Transverse colon (tissue), 4 donors: ENCODE measurements at regions of chr17 and their contacts with region 1.

Region 1: GRCh38 chr17:71548540-71549190 is 572.2 kb upstream of the SOX9 start:
- DNase-seq: no peak
- H3K4me3 ChIP-seq: no peak overlapping the region
- H3K27ac ChIP-seq: no peak overlapping the region
- H3K4me1 ChIP-seq: peaks cover 0 to under 1% (median 0%) of the 10 kb centered on the region in 4 donors
- H3K27me3 ChIP-seq: no peaks in the 10 kb centered on the region
- CTCF ChIP-seq: no peak
- EP300 ChIP-seq: no peak
- POLR2A ChIP-seq: no peak

Region 2: GRCh38 chr17:71127416-71127815 is 421.2 kb before region 1 on chr17:
- in situ Hi-C with region 1: no loop called
- intact Hi-C with region 1: no loop called
- DNase-seq: no peak
- H3K4me3 ChIP-seq: no peak overlapping the region
- H3K27ac ChIP-seq: no peak overlapping the region
- H3K4me1 ChIP-seq: no peaks in the 10 kb centered on the region
- H3K27me3 ChIP-seq: no peaks in the 10 kb centered on the region
- CTCF ChIP-seq: no peak
- EP300 ChIP-seq: no peak
- POLR2A ChIP-seq: no peak

Region 3: GRCh38 chr17:71600137-71600789 is 51.6 kb after region 1 on chr17:
- in situ Hi-C with region 1: loop called in 1 of 4 experiments (anchors 10 kb)
- intact Hi-C with region 1: no loop called
- DNase-seq: no peak
- H3K4me3 ChIP-seq: no peak overlapping the region
- H3K27ac ChIP-seq: no peak overlapping the region
- H3K4me1 ChIP-seq: peaks cover 7 to 24% (median 11%) of the 10 kb centered on the region in 4 donors
- H3K27me3 ChIP-seq: no peaks in the 10 kb centered on the region
- CTCF ChIP-seq: no peak
- EP300 ChIP-seq: no peak
- POLR2A ChIP-seq: no peak

Region 4: DNA sequence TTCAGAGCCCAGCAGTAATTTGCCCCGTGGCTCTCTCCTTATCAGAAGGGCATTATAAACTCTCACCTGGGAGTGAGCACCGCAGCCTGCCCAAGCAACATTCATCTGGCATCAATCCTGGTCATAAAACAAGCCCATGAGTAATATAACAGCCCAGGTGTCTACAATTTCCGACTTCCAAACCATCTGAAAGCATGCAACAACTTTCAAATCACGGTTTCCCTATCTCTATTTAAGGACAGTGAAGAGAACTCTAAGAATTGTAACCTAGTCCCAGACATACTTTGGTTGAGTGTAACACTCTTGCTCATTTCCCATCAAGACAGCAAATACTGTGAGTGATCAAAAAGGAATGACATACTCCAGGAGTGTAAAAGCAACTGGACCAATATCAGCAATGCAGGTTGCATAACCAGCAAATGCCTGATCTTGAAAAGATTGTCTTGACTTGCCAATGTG is 84.8 kb after region 1 on chr17:
- in situ Hi-C with region 1: loop called in 1 of 4 experiments (anchors 25 kb)
- intact Hi-C with region 1: no loop called
- DNase-seq: peak; percentile 75
- H3K4me3 ChIP-seq: no peak overlapping the region
- H3K27ac ChIP-seq: peak overlapping the region; percentile 54 to 78 (median 74)
- H3K4me1 ChIP-seq: peaks cover 8 to 32% (median 17%) of the 10 kb centered on the region in 4 donors
- H3K27me3 ChIP-seq: no peaks in the 10 kb centered on the region
- CTCF ChIP-seq: no peak
- EP300 ChIP-seq: no peak
- POLR2A ChIP-seq: no peak